Prostate gland (tissue), 2 donors: ENCODE measurements at regions of chr17 and their contacts with region 1.

Region 1: DNA sequence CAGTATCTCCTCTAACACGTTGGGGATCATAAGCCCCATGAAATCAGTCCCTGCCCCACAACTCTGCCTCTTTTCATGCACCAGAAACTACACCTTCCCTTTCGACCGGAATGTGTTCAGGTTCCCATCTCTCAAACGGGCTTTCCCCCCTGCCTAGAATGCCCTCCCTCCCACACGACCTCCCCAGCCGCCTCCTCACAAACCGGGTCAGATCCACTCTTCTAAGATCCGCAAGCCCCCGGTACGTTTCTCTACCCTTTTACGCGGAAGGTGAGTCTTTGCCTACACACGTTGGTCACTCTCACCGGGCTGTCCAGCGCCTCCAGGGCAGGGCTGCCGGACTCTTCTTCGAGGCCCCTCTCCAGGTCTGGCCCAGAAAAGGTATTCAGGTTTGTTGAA is 708 bp downstream of the DHX33 start:
- DNase-seq: no peak
- H3K4me3 ChIP-seq: peak overlapping the region; percentile 48 to 95
- H3K27ac ChIP-seq: peak overlapping the region in 1 of 2 donors; percentile 75
- H3K4me1 ChIP-seq: peaks cover 3% of the 10 kb centered on the region
- H3K27me3 ChIP-seq: no peaks in the 10 kb centered on the region
- CTCF ChIP-seq: no peak
- POLR2A ChIP-seq: no peak

Region 2: GRCh38 chr17:5249615-5250014 is 218.5 kb before region 1 on chr17:
- intact Hi-C with region 1: no loop called
- DNase-seq: peak; percentile 67
- H3K4me3 ChIP-seq: no peak overlapping the region
- H3K27ac ChIP-seq: no peak overlapping the region
- H3K4me1 ChIP-seq: no peaks in the 10 kb centered on the region
- H3K27me3 ChIP-seq: no peaks in the 10 kb centered on the region
- CTCF ChIP-seq: peak in 3 of 4 experiments; percentile 60 to 79 (median 69)
- POLR2A ChIP-seq: no peak

Region 3: GRCh38 chr17:5354876-5355415 is 113.1 kb before region 1 on chr17:
- intact Hi-C with region 1: no loop called
- DNase-seq: no peak
- H3K4me3 ChIP-seq: no peak overlapping the region
- H3K27ac ChIP-seq: no peak overlapping the region
- H3K4me1 ChIP-seq: no peaks in the 10 kb centered on the region
- H3K27me3 ChIP-seq: no peaks in the 10 kb centered on the region
- CTCF ChIP-seq: no peak
- POLR2A ChIP-seq: no peak

Region 4: DNA sequence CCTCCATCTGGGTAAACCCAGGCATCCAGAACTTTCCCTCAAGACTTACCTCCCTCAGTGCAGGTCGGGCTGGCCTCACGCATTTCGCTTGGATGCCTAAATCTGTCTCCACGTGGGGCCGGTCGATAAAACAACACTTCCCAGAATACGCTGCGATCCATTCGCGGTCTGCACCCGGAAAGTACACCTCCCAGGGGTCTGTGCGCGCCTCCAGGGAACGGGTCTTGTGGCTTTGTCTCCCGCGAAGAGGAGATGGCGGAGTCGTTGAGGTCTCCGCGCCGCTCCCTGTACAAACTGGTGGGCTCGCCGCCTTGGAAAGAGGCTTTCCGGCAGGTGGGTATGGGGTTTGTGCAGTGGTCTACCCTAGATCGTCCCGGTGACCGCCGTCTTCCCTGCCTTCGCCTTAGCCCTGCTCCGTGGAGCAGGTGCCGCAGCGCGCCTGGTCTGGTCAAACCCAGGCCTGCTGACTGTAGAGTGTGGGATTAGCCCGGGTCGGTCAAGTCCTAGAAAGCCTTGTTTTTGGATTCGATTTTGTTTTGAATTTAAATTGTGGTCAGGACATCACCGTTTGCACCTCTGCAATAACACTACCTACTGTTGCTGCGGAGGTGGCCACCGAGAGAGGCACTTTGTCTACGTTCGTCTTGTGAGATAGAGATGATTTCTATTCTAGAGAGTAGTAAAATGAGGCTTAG is 48.0 kb before region 1 on chr17 and contains the start of gene RPAIN:
- intact Hi-C with region 1: loop called (anchors 2 kb)
- DNase-seq: peak; percentile 91
- H3K4me3 ChIP-seq: peak within 1 kb of the TSS; percentile 65
- H3K27ac ChIP-seq: peak within 1 kb of the TSS; percentile 91
- H3K4me1 ChIP-seq: peaks cover 5% of the 10 kb centered on the region
- H3K27me3 ChIP-seq: no peaks in the 10 kb centered on the region
- CTCF ChIP-seq: no peak
- POLR2A ChIP-seq: peak; percentile 51
- total RNA-seq, gene RPAIN: 39.2 to 51.1 TPM